Activated CD4-positive, alpha-beta memory T cell treated with anti-CD3 and anti-CD28 coated beads for 36 hours (primary cell): ENCODE measurements at regions of chr3 and their contacts with region 1.

Region 1: GRCh38 chr3:71305231-71306206 is 278.0 kb downstream of the FOXP1 start:
- DNase-seq: peak; percentile 22
- H3K4me3 Mint-ChIP-seq: peak overlapping the region; percentile 77
- H3K27ac Mint-ChIP-seq: peak overlapping the region; percentile 87
- H3K4me1 Mint-ChIP-seq: peaks cover 86% of the 10 kb centered on the region
- H3K27me3 Mint-ChIP-seq: no peaks in the 10 kb centered on the region

Region 2: GRCh38 chr3:70856414-70857162 is 448.9 kb before region 1 on chr3:
- CTCF ChIA-PET with region 1: no interaction called
- POLR2A ChIA-PET with region 1: no interaction called
- intact Hi-C with region 1: loop called (anchors 2 kb)
- DNase-seq: no peak
- H3K4me3 Mint-ChIP-seq: no peak overlapping the region
- H3K27ac Mint-ChIP-seq: no peak overlapping the region
- H3K4me1 Mint-ChIP-seq: peaks cover 17% of the 10 kb centered on the region
- H3K27me3 Mint-ChIP-seq: peaks cover 15% of the 10 kb centered on the region

Region 3: GRCh38 chr3:71050538-71051258 is 254.8 kb before region 1 on chr3:
- CTCF ChIA-PET with region 1: no interaction called
- POLR2A ChIA-PET with region 1: no interaction called
- intact Hi-C with region 1: loop called (anchors 2 kb)
- DNase-seq: peak; percentile 61
- H3K4me3 Mint-ChIP-seq: peak overlapping the region; percentile 6
- H3K27ac Mint-ChIP-seq: peak overlapping the region; percentile 86
- H3K4me1 Mint-ChIP-seq: peaks cover 100% of the 10 kb centered on the region
- H3K27me3 Mint-ChIP-seq: no peaks in the 10 kb centered on the region

Region 4: DNA sequence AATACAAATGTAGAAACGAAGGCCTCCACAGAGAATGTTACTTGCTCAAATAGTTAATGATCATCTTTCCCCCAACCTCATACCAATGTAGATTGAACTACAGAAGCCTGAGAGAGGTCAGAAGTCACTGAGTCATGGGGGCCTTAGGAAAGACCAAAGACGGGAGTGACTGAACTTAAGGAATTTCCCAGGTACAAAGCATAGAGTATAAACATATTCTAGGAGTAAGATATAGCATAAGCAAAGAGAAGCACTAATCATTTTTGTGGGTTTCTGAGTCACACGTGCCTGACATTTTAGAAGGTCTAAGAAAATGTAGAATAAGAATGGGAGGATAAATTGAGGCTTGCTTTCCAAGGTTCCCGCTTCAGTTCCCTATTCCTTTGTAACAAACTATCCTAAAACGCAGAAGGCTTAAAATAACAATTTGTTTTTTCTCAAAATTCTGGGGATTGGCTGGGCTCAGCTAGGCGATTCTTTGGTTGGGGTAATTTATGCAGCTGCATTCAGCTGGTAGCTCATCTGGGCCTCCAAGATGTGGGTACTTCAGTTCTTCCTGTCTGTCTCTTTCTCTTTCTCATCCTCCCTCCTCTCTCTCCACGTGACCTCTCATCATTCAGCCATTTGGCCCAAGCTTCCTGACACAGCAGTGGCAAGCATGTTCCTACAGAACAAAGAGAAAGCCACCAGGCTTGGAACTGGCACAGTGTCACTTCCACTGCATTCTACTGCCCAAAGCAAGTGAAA is 144.5 kb before region 1 on chr3:
- CTCF ChIA-PET with region 1: no interaction called
- POLR2A ChIA-PET with region 1: no interaction called
- intact Hi-C with region 1: no loop called
- DNase-seq: peak; percentile 18
- H3K4me3 Mint-ChIP-seq: no peak overlapping the region
- H3K27ac Mint-ChIP-seq: peak overlapping the region; percentile 51
- H3K4me1 Mint-ChIP-seq: peaks cover 56% of the 10 kb centered on the region
- H3K27me3 Mint-ChIP-seq: no peaks in the 10 kb centered on the region

Region 5: DNA sequence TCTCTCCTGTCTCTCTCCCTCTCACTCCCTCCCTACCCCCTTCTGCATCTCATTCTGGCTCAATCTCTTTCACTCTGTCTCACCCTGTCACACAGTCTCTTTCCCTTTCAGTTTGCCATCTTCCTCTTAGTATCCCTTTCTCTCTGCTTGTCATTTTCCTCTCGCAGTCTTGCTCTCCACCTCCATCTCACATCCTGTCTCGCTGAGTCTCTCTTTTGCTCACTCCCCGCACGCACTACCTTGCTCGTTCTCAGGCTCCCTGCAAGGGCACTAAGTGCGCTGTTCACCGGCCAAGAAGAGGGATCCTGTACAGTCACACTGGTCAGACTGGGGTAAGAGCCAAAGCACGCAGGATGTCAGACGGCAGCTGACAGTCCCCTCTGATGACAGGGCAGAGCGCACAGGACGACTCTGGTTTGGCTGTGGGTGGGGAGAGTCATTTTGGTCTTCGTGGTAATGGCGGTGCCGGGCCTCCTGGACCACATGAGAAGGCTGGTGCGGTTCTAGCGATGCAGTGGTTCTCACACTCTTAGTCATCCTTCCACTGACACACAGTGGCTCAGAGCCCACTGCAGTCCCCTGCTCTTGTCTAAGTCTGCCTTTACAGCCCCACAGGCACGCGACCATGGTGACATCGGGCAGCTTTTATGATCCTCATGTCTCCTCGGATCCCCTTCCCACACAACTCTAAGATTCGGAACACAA is 78.8 kb before region 1 on chr3:
- CTCF ChIA-PET with region 1: interaction called, 3 read pairs
- POLR2A ChIA-PET with region 1: interaction called, 25 read pairs
- intact Hi-C with region 1: loop called (anchors 1 kb)
- DNase-seq: peak; percentile 96
- H3K4me3 Mint-ChIP-seq: peak overlapping the region; percentile 77
- H3K27ac Mint-ChIP-seq: peak overlapping the region; percentile 96
- H3K4me1 Mint-ChIP-seq: peaks cover 77% of the 10 kb centered on the region
- H3K27me3 Mint-ChIP-seq: no peaks in the 10 kb centered on the region

Region 6: GRCh38 chr3:71380096-71380495 is 74.6 kb after region 1 on chr3:
- CTCF ChIA-PET with region 1: no interaction called
- POLR2A ChIA-PET with region 1: interaction called, 8 read pairs
- intact Hi-C with region 1: loop called (anchors 1 kb)
- DNase-seq: no peak
- H3K4me3 Mint-ChIP-seq: no peak overlapping the region
- H3K27ac Mint-ChIP-seq: peak overlapping the region; percentile 85
- H3K4me1 Mint-ChIP-seq: peaks cover 82% of the 10 kb centered on the region
- H3K27me3 Mint-ChIP-seq: no peaks in the 10 kb centered on the region

Region 7: GRCh38 chr3:71583566-71584449 is 278.3 kb after region 1 on chr3 and contains the start of gene FOXP1:
- CTCF ChIA-PET with region 1: interaction called, 3 read pairs
- POLR2A ChIA-PET with region 1: interaction called, 20 read pairs
- intact Hi-C with region 1: loop called (anchors 1 kb)
- DNase-seq: peak; percentile 75
- H3K4me3 Mint-ChIP-seq: peak within 1 kb of the TSS; percentile 88
- H3K27ac Mint-ChIP-seq: peak within 1 kb of the TSS; percentile 91
- H3K4me1 Mint-ChIP-seq: peaks cover 56% of the 10 kb centered on the region
- H3K27me3 Mint-ChIP-seq: peaks cover 1% of the 10 kb centered on the region
- total RNA-seq, gene FOXP1: 94.4 to 102 TPM